ENCODE measurements at regions of chr19 and their contacts with region 1.

Region 1: GRCh38 chr19:18152444-18152816 is 533 bp upstream of the PIK3R2 start:
- DNase-seq: peak; percentile 96 to 99 (median 96)
- H3K4me3 ChIP-seq: peak overlapping the region; percentile 74 to 79
- H3K4me3 Mint-ChIP-seq: peak overlapping the region; percentile 84 to 95 (median 91)
- H3K27ac ChIP-seq: peak overlapping the region; percentile 74
- H3K27ac Mint-ChIP-seq: peak overlapping the region; percentile 88 to 99 (median 97)
- H3K4me1 ChIP-seq: peaks cover 28% of the 10 kb centered on the region
- H3K4me1 Mint-ChIP-seq: peaks cover 14 to 38% (median 21%) of the 10 kb centered on the region in 4 donors
- H3K27me3 ChIP-seq: no peaks in the 10 kb centered on the region
- H3K27me3 Mint-ChIP-seq: no peaks in the 10 kb centered on the region

Region 2: GRCh38 chr19:17618936-17619335 is 533.5 kb before region 1 on chr19:
- CTCF ChIA-PET with region 1: no interaction called
- POLR2A ChIA-PET with region 1: no interaction called
- intact Hi-C with region 1: no loop called
- DNase-seq: no peak
- H3K4me3 ChIP-seq: no peak overlapping the region
- H3K4me3 Mint-ChIP-seq: no peak overlapping the region
- H3K27ac ChIP-seq: no peak overlapping the region
- H3K27ac Mint-ChIP-seq: no peak overlapping the region
- H3K4me1 ChIP-seq: peaks cover 6% of the 10 kb centered on the region
- H3K4me1 Mint-ChIP-seq: peaks cover 7 to 11% (median 10%) of the 10 kb centered on the region in 4 donors
- H3K27me3 ChIP-seq: peaks cover 7% of the 10 kb centered on the region
- H3K27me3 Mint-ChIP-seq: peaks cover 14 to 31% of the 10 kb centered on the region in 2 donors

Region 3: DNA sequence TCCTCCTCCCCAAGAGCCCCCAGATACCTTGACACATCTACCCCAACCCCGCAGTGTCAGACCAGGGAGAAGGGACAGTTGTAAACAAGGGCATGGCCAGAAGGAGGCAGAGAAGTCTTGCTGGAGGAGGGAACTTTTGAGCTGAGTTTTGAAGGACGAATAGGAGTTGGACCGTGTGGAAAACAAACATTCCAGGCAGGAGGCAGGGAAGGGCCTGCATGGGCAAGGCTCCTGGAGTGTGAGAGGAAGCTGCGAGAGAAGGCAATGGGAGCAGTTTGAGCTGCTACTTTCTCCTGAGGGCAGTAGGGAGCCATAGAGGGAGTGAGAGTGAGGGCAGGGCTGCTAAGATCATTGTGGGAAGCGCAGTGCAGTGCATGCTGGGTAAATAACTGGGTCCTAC is 89.0 kb before region 1 on chr19:
- CTCF ChIA-PET with region 1: no interaction called
- POLR2A ChIA-PET with region 1: no interaction called
- intact Hi-C with region 1: loop called (anchors 5 kb)
- DNase-seq: peak in 3 of 5 donors; percentile 24 to 32 (median 24)
- H3K4me3 ChIP-seq: no peak overlapping the region
- H3K4me3 Mint-ChIP-seq: peak overlapping the region in 1 of 8 donors; percentile 59
- H3K27ac ChIP-seq: no peak overlapping the region
- H3K27ac Mint-ChIP-seq: peak overlapping the region in 4 of 7 donors; percentile 16 to 76 (median 43)
- H3K4me1 ChIP-seq: peaks cover 3% of the 10 kb centered on the region
- H3K4me1 Mint-ChIP-seq: peaks cover 2 to 6% (median 3%) of the 10 kb centered on the region in 4 donors
- H3K27me3 ChIP-seq: no peaks in the 10 kb centered on the region
- H3K27me3 Mint-ChIP-seq: no peaks in the 10 kb centered on the region

Region 4: GRCh38 chr19:18109733-18110595 is 42.5 kb before region 1 on chr19:
- CTCF ChIA-PET with region 1: interaction called, 38 read pairs
- POLR2A ChIA-PET with region 1: interaction called, 11 read pairs
- intact Hi-C with region 1: loop called (anchors 1 kb)
- DNase-seq: peak in 2 of 5 donors; percentile 32 to 33
- H3K4me3 ChIP-seq: peak overlapping the region; percentile 36 to 67
- H3K4me3 Mint-ChIP-seq: peak overlapping the region; percentile 74 to 89 (median 83)
- H3K27ac ChIP-seq: peak overlapping the region; percentile 61
- H3K27ac Mint-ChIP-seq: peak overlapping the region in 5 of 7 donors; percentile 63 to 94 (median 90)
- H3K4me1 ChIP-seq: peaks cover 20% of the 10 kb centered on the region
- H3K4me1 Mint-ChIP-seq: peaks cover 9 to 24% (median 16%) of the 10 kb centered on the region in 4 donors
- H3K27me3 ChIP-seq: no peaks in the 10 kb centered on the region
- H3K27me3 Mint-ChIP-seq: no peaks in the 10 kb centered on the region

Region 5: DNA sequence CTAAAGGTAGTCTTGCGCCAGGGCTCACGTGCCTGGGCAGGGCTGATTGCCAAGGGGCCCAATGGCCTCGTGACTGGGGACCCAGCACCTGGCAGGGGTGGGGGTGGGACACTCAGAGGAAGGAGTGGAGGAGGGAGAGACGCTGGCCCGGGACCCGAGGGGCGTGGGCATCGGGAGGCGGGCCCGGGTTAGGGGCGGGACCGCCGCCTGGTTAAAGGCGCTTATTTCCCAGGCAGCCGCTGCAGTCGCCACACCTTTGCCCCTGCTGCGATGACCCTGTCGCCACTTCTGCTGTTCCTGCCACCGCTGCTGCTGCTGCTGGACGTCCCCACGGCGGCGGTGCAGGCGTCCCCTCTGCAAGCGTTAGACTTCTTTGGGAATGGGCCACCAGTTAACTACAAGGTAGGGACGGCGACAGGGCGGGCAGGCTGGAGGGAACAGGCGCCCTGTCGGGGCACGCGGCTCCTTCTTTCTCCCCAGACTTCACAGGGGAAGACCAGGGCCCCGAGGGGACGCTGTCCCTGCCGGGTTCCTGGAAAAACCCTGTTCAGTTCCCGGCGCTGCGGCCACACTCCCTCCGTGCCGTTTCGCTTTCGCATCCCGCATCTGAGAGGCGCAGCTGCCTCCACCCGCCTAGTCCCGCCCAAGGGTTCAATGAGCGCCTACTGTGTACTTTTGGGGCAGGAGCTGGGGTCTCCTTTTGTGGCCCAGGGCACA is 21.3 kb after region 1 on chr19 and contains the start of gene IFI30:
- CTCF ChIA-PET with region 1: interaction called, 5 read pairs
- POLR2A ChIA-PET with region 1: no interaction called
- intact Hi-C with region 1: loop called (anchors 2 kb)
- DNase-seq: peak; percentile 45 to 56 (median 51)
- H3K4me3 ChIP-seq: peak within 1 kb of the TSS; percentile 73 to 77
- H3K4me3 Mint-ChIP-seq: peak within 1 kb of the TSS; percentile 88 to 96 (median 91)
- H3K27ac ChIP-seq: peak within 1 kb of the TSS; percentile 62
- H3K27ac Mint-ChIP-seq: peak within 1 kb of the TSS; percentile 64 to 93 (median 85)
- H3K4me1 ChIP-seq: peaks cover 18% of the 10 kb centered on the region
- H3K4me1 Mint-ChIP-seq: peaks cover 3 to 20% (median 9%) of the 10 kb centered on the region in 4 donors
- H3K27me3 ChIP-seq: no peaks in the 10 kb centered on the region
- H3K27me3 Mint-ChIP-seq: no peaks in the 10 kb centered on the region
- total RNA-seq, gene IFI30: 48.3 to 56.9 TPM

Region 6: DNA sequence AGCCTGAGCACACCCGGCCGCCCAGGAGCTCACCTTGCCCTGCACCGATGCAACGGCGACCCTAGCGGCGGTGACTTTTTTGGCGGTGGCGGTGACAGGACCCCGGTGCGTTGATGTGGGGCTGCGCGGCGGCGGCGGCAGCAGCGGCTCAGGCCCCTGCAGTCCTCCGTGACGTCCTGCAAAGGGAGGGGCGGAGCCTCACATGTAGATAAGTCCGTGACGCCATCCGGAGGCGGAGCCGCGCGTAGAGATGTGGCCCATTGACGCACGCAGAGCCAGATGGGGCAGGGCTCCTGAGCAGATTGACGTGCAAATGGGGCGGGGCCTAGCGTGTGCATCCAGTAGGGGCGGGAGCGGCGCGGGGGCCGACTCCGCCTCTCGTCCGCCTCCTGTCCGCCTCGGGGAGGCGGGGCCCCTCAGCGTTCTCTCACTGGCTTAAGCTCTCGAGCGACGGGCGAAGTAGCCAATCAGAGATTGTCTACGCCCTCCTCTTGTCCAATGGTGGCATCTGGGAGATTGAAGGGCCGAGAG is 51.5 kb after region 1 on chr19 and contains the start of gene RAB3A:
- CTCF ChIA-PET with region 1: no interaction called
- POLR2A ChIA-PET with region 1: no interaction called
- intact Hi-C with region 1: loop called (anchors 2 kb)
- DNase-seq: peak; percentile 98 to 100 (median 100)
- H3K4me3 ChIP-seq: peak within 1 kb of the TSS; percentile 84 to 93
- H3K4me3 Mint-ChIP-seq: peak within 1 kb of the TSS; percentile 91 to 98 (median 96)
- H3K27ac ChIP-seq: peak within 1 kb of the TSS; percentile 63
- H3K27ac Mint-ChIP-seq: peak within 1 kb of the TSS; percentile 79 to 98 (median 98)
- H3K4me1 ChIP-seq: peaks cover 23% of the 10 kb centered on the region
- H3K4me1 Mint-ChIP-seq: peaks cover 13 to 33% (median 21%) of the 10 kb centered on the region in 4 donors
- H3K27me3 ChIP-seq: no peaks in the 10 kb centered on the region
- H3K27me3 Mint-ChIP-seq: peaks cover 0 to 1% of the 10 kb centered on the region in 2 donors
- total RNA-seq, gene RAB3A: 4.7 to 4.8 TPM

Measured in CD4-positive, alpha-beta memory T cell (primary cell).